ENCODE measurements at regions of chr17 and their contacts with region 1.

Region 1: GRCh38 chr17:7219812-7220581 is at the starts of genes ACADVL and DLG4:
- DNase-seq: peak; percentile 75
- ATAC-seq: peak; percentile 85
- H3K4me3 ChIP-seq: peak within 1 kb of the TSS; percentile 73 to 93 (median 90)
- H3K27ac ChIP-seq: peak within 1 kb of the TSS; percentile 96
- H3K4me1 ChIP-seq: peaks cover 62% of the 10 kb centered on the region
- H3K27me3 ChIP-seq: peaks cover 0 to 4% of the 10 kb centered on the region in 2 experiments; a peak in 2 of 5 replicates
- CTCF ChIP-seq: 0 out of 2 replicates have a peak, but pooled peaks have one; percentile 8
- EP300 ChIP-seq: no peak
- POLR2A ChIP-seq: peak; percentile 88 to 94
- RAD21 ChIP-seq: peak; percentile 46; the same call in 1 of the 2 replicates
- total RNA-seq, gene ACADVL: 106 and 219 TPM in 2 replicates
- total RNA-seq, gene DLG4: 0.25 and 0.71 TPM in 2 replicates

Region 2: DNA sequence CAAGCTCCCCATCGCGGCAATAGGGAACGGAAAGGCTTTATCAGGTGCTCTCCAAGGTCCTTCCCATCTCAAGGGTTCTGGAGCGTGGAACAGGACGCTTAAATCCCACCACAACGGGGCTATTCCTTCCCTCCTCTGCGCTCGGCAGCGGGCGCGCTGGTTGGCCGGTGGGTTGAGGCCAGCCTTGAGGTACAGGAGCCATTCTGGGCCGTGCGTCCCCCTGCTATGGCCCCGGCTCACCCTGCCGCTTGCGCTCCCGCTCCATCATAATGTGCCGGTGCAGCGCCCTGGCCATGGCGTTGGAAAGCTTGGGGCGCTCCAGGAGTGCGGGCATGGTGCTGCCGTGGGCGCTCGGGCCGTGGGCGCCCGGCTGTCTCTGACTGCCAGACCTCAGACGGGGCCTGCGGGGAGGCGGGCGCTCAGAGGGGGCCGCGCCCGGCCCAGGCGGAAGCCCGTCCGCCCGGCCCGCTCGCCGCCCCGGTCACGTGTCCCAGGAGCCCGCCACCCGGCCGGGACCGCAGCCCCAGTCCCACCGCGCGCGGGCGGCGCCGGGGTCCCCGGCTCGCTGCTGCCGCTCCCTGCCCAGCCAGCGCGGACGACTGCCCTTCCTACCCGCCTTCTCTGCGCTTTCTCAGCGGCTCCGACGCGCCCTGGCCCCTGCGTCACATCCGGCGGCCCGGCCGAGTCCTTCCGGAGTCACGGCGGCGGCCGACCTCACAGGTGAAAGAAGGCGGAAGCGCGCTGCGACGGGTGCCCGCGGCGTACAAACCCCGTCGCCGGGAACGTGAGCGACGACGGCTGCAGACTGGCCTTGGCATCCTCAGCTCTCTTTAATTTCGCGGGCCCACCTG is 94.9 kb after region 1 on chr17 and contains the start of gene GPS2:
- CTCF ChIA-PET with region 1: no interaction called
- POLR2A ChIA-PET with region 1: interaction called, 12 read pairs
- in situ Hi-C with region 1: no loop called
- intact Hi-C with region 1: no loop called
- DNase-seq: peak; percentile 81
- ATAC-seq: peak; percentile 75
- H3K4me3 ChIP-seq: peak within 1 kb of the TSS; percentile 82 to 89 (median 82)
- H3K27ac ChIP-seq: peak within 1 kb of the TSS; percentile 60
- H3K4me1 ChIP-seq: peaks cover 40% of the 10 kb centered on the region
- H3K27me3 ChIP-seq: no peaks in the 10 kb centered on the region
- CTCF ChIP-seq: peak; percentile 26
- EP300 ChIP-seq: no peak
- POLR2A ChIP-seq: peak; percentile 69 to 93
- RAD21 ChIP-seq: peak; percentile 35; the same call in 1 of the 2 replicates
- total RNA-seq, gene GPS2: 43.8 and 58.0 TPM in 2 replicates

Measured in HepG2 (cell line).